IMR-90 (cell line): ENCODE measurements at regions of chr16 and their contacts with region 1.

Region 1: GRCh38 chr16:31382485-31383161 is 10.5 kb upstream of the ITGAD start:
- DNase-seq: peak; percentile 40
- ATAC-seq: peak; percentile 89
- H3K4me3 ChIP-seq: no peak overlapping the region
- H3K27ac ChIP-seq: no peak overlapping the region
- H3K4me1 ChIP-seq: no peaks in the 10 kb centered on the region; the same call in 1 of the 2 replicates
- H3K27me3 ChIP-seq: peaks cover 14% of the 10 kb centered on the region
- CTCF ChIP-seq: peak; percentile 64
- POLR2A ChIP-seq: no peak
- RAD21 ChIP-seq: peak; percentile 51

Region 2: GRCh38 chr16:31179747-31180459 is 202.7 kb before region 1 on chr16 and contains the start of gene FUS:
- CTCF ChIA-PET with region 1: no interaction called
- POLR2A ChIA-PET with region 1: interaction called, 14 read pairs
- dilution Hi-C with region 1: no loop called
- in situ Hi-C with region 1: no loop called
- intact Hi-C with region 1: no loop called
- DNase-seq: peak; percentile 83
- ATAC-seq: peak; percentile 84
- H3K4me3 ChIP-seq: peak within 1 kb of the TSS; percentile 69
- H3K27ac ChIP-seq: peak within 1 kb of the TSS; percentile 97
- H3K4me1 ChIP-seq: peaks cover 6% of the 10 kb centered on the region; the same call in 1 of the 2 replicates
- H3K27me3 ChIP-seq: no peaks in the 10 kb centered on the region
- CTCF ChIP-seq: no peak
- POLR2A ChIP-seq: peak; percentile 100
- RAD21 ChIP-seq: no peak
- total RNA-seq, gene FUS: 42.8 and 51.9 TPM in 2 replicates

Region 3: DNA sequence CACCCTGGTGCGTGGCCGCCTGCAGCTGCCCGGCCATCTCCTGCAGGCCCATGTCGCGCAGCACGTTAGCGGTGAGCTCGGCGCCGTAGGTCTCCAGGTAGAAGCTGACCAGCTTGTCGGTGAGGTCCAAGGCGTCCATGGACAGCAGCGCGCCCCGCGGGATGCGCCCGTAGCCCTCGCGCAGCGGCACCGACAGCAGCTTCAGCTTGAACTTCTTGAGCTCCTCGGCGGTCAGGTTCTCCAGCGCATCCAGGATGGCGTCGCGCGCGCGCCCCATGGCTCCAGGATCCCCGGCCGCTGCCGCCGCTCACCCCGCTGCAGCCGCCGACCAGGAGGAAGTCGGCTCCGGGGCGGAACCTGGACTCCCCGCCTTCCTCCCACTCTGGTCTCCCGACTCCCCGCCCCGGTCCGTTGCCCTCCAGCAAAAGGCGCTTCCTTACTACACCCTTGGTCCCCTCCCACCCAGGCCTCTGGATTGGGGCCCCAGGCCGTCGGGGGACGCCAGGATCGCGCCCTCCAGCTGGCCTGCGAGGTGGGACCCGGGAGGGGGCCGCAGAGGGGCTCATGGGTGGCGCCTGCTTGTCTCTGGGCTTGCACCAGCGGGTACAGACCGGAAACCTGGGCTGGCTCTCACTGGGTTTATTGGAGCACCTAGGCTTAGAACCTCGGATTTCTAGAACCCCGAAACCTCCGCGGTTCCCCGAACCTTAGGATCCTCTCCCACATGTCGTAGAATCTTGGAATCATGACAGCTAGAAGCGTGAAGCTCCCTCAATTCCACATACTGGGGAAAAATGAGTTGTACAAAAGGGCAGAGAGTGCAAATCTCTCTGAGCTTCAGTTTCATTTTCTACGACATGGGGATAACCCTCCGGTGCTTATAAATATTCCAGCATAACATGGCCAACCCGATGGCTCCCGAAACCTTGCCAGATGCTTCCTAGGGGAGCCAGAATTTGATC is 179.9 kb before region 1 on chr16 and contains the start of gene PYCARD:
- CTCF ChIA-PET with region 1: no interaction called
- POLR2A ChIA-PET with region 1: no interaction called
- dilution Hi-C with region 1: no loop called
- in situ Hi-C with region 1: no loop called
- intact Hi-C with region 1: loop called (anchors 2 kb)
- DNase-seq: peak; percentile 19
- ATAC-seq: peak; percentile 59
- H3K4me3 ChIP-seq: peak within 1 kb of the TSS; percentile 87
- H3K27ac ChIP-seq: peak within 1 kb of the TSS; percentile 13; the same call in 1 of the 2 replicates
- H3K4me1 ChIP-seq: peaks cover 4% of the 10 kb centered on the region; the same call in 1 of the 2 replicates
- H3K27me3 ChIP-seq: peaks cover 16% of the 10 kb centered on the region
- CTCF ChIP-seq: no peak
- POLR2A ChIP-seq: no peak
- RAD21 ChIP-seq: no peak; the same call in 1 of the 2 replicates
- total RNA-seq, gene PYCARD: 10.2 and 13.1 TPM in 2 replicates

Region 4: DNA sequence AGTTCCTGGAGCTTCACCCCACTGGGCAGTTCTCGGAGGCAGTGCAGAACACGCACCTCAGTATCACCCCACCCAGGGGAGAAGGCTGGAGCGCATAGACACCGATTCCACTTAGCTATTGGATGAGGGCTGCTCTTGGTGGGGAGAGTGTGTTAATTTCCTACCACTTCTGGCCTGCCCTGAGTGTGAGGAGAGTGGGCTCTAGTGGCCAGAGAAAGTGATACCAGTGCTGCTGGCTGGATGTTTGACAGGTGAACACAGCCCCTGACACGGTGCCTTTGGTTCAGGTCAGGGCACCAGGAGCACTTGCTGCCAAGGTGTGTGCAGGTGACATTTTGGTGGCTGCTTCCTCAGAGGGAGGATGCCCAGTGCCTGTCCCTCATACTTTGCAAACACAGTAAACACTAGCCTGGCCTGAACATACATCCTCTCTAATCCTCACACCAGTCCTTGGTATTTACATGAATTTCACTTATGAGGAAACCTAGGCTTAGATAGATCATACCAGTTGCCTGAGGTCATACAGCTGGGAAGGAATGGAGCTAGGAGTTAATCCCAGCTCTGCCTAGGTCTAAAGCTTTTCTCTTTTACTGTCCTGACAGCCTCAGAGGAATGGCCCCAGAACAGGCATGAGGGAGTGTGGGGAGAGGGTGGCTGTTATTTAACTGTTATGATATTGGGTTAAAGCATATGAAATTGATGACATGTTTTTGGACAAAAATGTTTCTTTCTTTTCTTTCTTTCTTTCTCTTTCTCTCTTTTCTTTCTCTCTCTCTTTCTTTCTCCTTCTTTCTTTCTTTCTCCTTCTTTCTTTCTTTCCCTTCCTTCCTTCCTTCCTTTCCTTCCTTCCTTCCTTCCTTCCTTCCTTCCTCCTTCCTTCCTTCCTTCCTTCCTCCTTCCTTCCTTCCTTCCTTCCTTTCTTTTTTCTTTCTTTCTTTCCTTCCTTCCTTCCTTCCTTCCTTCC is 48.7 kb before region 1 on chr16:
- CTCF ChIA-PET with region 1: no interaction called
- POLR2A ChIA-PET with region 1: no interaction called
- dilution Hi-C with region 1: no loop called
- in situ Hi-C with region 1: no loop called
- intact Hi-C with region 1: no loop called
- DNase-seq: peak; percentile 13
- ATAC-seq: peak; percentile 71
- H3K4me3 ChIP-seq: no peak overlapping the region
- H3K27ac ChIP-seq: no peak overlapping the region
- H3K4me1 ChIP-seq: no peaks in the 10 kb centered on the region
- H3K27me3 ChIP-seq: peaks cover 27% of the 10 kb centered on the region
- CTCF ChIP-seq: no peak
- POLR2A ChIP-seq: no peak
- RAD21 ChIP-seq: no peak